Activated naive CD4-positive, alpha-beta T cell treated with anti-CD3 and anti-CD28 coated beads for 36 hours (primary cell): ENCODE measurements at regions of chr3 and their contacts with region 1.

Region 1: DNA sequence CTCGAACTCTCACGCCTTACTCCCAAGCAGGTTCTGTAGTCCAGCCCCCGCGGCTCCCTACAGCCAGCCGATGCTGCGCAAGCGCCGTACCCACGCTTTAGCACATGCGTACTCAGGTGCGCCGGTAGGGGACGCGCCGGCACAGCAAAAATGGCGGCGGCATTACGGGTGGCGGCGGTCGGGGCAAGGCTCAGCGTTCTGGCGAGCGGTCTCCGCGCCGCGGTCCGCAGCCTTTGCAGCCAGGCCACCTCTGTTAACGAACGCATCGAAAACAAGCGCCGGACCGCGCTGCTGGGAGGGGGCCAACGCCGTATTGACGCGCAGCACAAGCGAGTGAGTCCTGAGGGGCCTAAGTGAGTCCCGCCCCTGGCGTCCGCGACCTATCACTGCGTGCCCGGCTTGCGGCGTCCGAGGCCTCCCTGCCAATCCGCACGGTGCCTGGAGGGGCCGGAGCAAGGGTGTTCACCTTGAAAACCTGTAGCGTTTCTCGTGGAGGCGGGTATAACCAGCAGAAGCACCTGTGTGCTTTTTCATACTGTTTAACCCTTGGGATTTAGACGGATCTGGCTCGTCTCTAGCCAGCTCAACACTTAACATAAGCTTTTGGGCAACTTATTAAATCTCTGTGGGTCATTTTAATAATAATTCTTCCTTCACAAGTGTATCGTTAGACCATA is at the start of gene PCCB:
- DNase-seq: peak; percentile 95
- H3K4me3 Mint-ChIP-seq: peak within 1 kb of the TSS; percentile 83
- H3K27ac Mint-ChIP-seq: peak within 1 kb of the TSS; percentile 90
- H3K4me1 Mint-ChIP-seq: peaks cover 18% of the 10 kb centered on the region
- H3K27me3 Mint-ChIP-seq: no peaks in the 10 kb centered on the region
- total RNA-seq, gene PCCB: 86.0 to 87.6 TPM

Region 2: DNA sequence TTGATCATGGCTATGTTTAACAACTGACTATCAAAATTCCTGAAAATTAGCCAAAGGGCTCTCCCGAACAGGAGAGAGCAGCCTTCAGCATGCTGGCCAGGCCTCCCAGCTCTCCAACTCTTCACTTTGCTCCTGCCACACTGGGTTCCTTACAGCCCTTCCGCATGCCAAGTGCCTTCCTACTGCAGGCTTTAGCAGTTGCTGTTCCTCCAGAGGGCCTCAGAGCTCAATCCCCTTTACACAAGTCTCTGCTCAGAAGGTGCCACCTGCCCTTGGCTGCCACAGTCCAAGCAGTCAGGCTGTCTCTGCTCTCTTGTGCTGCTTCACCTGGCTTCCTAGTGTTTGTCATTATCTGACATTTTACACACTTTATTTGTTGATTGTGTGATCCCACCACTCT is 837.9 kb before region 1 on chr3:
- CTCF ChIA-PET with region 1: no interaction called
- intact Hi-C with region 1: no loop called
- DNase-seq: no peak
- H3K4me3 Mint-ChIP-seq: no peak overlapping the region
- H3K27ac Mint-ChIP-seq: no peak overlapping the region
- H3K4me1 Mint-ChIP-seq: no peaks in the 10 kb centered on the region
- H3K27me3 Mint-ChIP-seq: no peaks in the 10 kb centered on the region

Region 3: GRCh38 chr3:135965506-135966270 is 284.7 kb before region 1 on chr3 and contains the start of gene PPP2R3A:
- CTCF ChIA-PET with region 1: no interaction called
- intact Hi-C with region 1: loop called (anchors 5 kb)
- DNase-seq: peak; percentile 70
- H3K4me3 Mint-ChIP-seq: peak within 1 kb of the TSS; percentile 74
- H3K27ac Mint-ChIP-seq: no peak within 1 kb of the TSS
- H3K4me1 Mint-ChIP-seq: peaks cover 8% of the 10 kb centered on the region
- H3K27me3 Mint-ChIP-seq: peaks cover 37% of the 10 kb centered on the region
- total RNA-seq, gene PPP2R3A: 0.17 TPM

Region 4: GRCh38 chr3:136142592-136142991 is 107.8 kb before region 1 on chr3:
- CTCF ChIA-PET with region 1: interaction called, 4 read pairs
- intact Hi-C with region 1: loop called (anchors 2 kb)
- DNase-seq: no peak
- H3K4me3 Mint-ChIP-seq: no peak overlapping the region
- H3K27ac Mint-ChIP-seq: no peak overlapping the region
- H3K4me1 Mint-ChIP-seq: peaks cover 27% of the 10 kb centered on the region
- H3K27me3 Mint-ChIP-seq: no peaks in the 10 kb centered on the region

Region 5: DNA sequence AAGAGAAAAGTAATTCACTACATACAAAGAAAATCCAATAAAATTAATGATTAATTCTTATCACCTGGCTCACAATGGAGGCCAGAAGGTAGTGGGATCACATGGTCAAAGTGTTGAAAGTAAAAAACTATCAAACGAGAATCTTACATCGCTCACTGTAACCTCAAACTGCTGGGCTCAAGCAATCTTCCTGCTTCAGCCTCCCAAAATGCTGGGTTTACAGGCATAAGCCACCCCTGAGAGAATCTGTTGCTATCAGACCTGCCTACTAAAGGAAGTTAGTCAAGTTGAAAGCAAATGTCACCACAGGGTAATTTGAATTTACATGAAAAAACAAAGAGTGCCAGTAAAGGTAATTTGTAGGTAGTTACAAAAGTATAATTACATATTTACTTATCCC is 103.1 kb after region 1 on chr3:
- CTCF ChIA-PET with region 1: no interaction called
- intact Hi-C with region 1: loop called (anchors 2 kb)
- DNase-seq: peak; percentile 61
- H3K4me3 Mint-ChIP-seq: no peak overlapping the region
- H3K27ac Mint-ChIP-seq: peak overlapping the region; percentile 82
- H3K4me1 Mint-ChIP-seq: peaks cover 12% of the 10 kb centered on the region
- H3K27me3 Mint-ChIP-seq: no peaks in the 10 kb centered on the region